ENCODE measurements at regions of chr15 and their contacts with region 1.

Region 1: DNA sequence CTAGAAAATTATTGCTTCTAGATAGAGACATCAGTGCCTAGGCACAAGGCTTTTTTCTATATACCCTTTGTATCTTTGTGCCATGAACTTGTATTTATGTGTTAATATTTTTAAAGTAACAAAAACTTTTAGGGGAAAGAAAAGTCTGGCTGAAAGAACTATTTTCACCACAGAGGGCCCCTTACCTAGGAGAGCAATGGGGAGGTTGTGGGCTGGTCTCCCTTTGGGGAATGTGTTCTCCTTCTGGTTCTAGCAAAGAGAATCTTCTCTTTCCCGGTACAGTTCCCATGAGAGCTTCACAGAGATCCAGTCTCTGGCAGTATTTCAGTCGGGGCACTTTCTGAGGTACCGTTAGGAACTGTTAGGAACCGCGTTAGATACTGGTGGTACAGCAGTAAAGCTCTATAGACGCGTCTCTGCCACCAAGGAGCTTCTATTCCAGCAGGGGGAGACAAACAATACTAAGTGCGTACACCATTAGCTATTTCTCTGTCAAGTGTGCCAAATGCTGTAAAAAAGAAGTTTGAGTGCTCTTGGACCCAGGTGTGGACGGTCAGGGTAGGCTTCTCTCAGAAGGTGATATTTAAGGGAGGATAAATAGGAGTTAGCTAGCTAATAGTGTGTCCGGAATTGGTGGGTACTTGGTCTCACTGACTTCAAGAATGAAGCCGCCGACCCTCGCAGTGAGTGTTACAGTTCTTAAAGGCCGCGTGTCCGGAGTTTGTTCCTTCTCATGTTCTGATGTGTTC is 4.6 kb upstream of the EPB42 start:
- DNase-seq: peak in 2 of 4 experiments; percentile 56 to 78
- ATAC-seq: peak; percentile 84
- H3K4me3 ChIP-seq: no peak overlapping the region
- H3K27ac ChIP-seq: no peak overlapping the region
- H3K4me1 ChIP-seq: peaks cover 14 to 27% of the 10 kb centered on the region in 2 experiments; a peak in 4 of 5 replicates
- H3K27me3 ChIP-seq: no peaks in the 10 kb centered on the region
- CTCF ChIP-seq: peak; percentile 70 to 82 (median 81)
- EP300 ChIP-seq: no peak
- POLR2A ChIP-seq: no peak
- RAD21 ChIP-seq: peak; percentile 81 to 95

Region 2: GRCh38 chr15:43056696-43057095 is 168.7 kb before region 1 on chr15:
- CTCF ChIA-PET with region 1: no interaction called
- POLR2A ChIA-PET with region 1: no interaction called
- in situ Hi-C with region 1: no loop called
- intact Hi-C with region 1: no loop called
- DNase-seq: no peak
- ATAC-seq: no peak
- H3K4me3 ChIP-seq: no peak overlapping the region
- H3K27ac ChIP-seq: no peak overlapping the region
- H3K4me1 ChIP-seq: no peaks in the 10 kb centered on the region
- H3K27me3 ChIP-seq: no peaks in the 10 kb centered on the region
- CTCF ChIP-seq: no peak
- EP300 ChIP-seq: no peak
- POLR2A ChIP-seq: no peak
- RAD21 ChIP-seq: no peak

Region 3: GRCh38 chr15:43214592-43215295 is 10.6 kb before region 1 on chr15:
- CTCF ChIA-PET with region 1: no interaction called
- POLR2A ChIA-PET with region 1: interaction called, 10 read pairs
- in situ Hi-C with region 1: no loop called
- intact Hi-C with region 1: loop called (anchors 2 kb)
- DNase-seq: no peak
- ATAC-seq: no peak
- H3K4me3 ChIP-seq: no peak overlapping the region
- H3K27ac ChIP-seq: no peak overlapping the region
- H3K4me1 ChIP-seq: peaks cover 12 to 17% of the 10 kb centered on the region in 2 experiments; a peak in 4 of 5 replicates
- H3K27me3 ChIP-seq: no peaks in the 10 kb centered on the region
- CTCF ChIP-seq: no peak
- EP300 ChIP-seq: no peak
- POLR2A ChIP-seq: no peak
- RAD21 ChIP-seq: no peak